ENCODE measurements at regions of chr2 and their contacts with region 1.

Region 1: DNA sequence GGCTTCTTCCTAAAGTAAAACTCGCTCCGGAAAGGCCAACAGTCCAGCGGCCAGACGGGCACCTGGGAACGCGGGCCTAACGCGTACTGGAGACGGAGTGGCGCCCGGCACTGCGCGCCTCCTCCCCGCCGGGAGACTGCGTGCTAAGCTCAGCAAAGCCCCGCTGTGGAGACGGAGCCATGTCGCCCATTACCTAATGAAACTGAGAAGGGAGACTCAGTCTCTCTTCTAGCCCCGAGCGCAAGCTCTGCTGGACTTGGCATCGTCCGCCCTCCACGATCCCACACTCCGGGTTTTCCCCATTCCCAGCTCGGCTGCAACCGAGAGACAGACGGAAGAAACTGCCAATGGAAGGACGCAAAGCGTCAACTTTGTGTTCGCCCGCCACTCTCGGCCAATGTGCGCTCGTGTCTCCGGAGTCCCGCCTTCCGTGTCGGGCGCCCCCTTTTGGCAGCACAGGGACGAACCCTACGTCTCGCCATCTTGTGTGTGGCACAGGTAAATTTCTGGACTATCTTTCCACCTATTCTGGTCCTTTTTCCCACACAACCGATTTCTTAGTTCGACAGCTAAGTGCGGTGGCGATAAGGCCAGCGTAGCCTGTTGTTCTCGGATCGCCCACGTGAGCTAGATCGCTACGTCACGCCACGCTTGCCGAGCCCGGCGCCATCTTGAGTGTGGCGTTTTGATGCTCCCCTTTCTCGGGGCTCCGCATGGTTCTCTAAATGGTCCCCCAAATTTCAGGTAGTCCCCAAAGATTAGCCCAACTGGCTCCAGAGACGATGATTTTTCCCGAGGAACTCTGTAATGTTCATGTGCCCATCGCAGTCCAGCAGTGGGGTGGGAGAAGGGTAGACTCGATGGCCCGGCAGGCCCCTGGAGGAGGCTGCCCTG is 1.3 kb upstream of the PTMA start:
- DNase-seq: peak; percentile 94
- ATAC-seq: peak; percentile 47
- H3K4me3 Mint-ChIP-seq: peak overlapping the region; percentile 97
- H3K27ac Mint-ChIP-seq: peak overlapping the region; percentile 100
- H3K4me1 Mint-ChIP-seq: peaks cover 36% of the 10 kb centered on the region
- H3K27me3 Mint-ChIP-seq: no peaks in the 10 kb centered on the region
- CTCF ChIP-seq: peak; percentile 84

Region 2: GRCh38 chr2:231463698-231464575 is 243.0 kb before region 1 on chr2 and contains the start of gene NCL:
- CTCF ChIA-PET with region 1: no interaction called
- POLR2A ChIA-PET with region 1: interaction called, 40 read pairs
- intact Hi-C with region 1: loop called (anchors 1 kb)
- DNase-seq: peak; percentile 71
- ATAC-seq: peak; percentile 54
- H3K4me3 Mint-ChIP-seq: peak within 1 kb of the TSS; percentile 98
- H3K27ac Mint-ChIP-seq: peak within 1 kb of the TSS; percentile 100
- H3K4me1 Mint-ChIP-seq: peaks cover 39% of the 10 kb centered on the region
- H3K27me3 Mint-ChIP-seq: no peaks in the 10 kb centered on the region
- CTCF ChIP-seq: no peak
- total RNA-seq, gene NCL: 693 and 761 TPM in 2 replicates

Region 3: DNA sequence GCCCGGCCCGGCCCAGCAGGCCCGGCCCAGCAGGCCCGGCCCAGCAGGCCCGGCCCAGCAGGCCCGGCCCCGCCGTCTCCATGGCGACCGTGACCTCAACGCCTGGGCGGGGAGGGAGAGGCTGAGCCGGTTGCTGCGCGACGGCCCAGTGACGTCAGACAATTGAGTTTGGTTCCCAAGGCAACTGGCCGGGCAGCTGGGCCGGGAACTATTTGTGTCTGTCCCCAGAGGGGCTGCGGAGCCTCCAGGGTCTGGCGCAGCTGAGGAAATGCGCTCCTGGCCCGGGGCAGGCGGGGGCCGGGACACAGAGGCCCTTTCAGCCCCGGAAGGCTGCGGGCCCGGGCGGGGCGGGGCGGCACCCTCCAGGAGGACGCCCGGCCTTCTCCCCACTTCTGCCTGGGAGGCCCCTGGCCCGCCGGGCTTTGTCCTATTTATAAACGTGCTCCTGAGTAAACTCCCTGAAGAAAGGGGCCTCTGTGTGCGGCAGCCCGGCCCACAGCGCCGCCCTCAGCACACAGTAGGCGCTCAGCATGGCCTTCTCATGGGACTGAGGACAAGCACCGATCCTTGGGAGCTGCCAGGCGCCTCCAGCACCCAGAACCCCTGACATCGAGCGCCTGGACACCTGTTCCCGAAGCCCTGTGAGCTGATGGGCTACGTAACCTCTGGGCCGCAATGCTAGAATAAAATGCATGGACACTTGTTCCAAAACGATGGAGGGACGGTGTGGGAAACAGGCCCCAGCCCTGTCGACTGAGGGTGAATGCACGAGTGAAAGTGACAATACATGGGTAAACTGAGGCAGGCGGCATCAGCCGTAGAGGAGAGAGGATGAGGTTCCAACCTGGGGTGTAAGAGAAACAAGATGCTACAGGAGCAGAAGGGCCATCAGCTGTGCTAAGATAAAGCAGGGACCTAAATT is 102.0 kb before region 1 on chr2:
- CTCF ChIA-PET with region 1: interaction called, 3 read pairs
- POLR2A ChIA-PET with region 1: interaction called, 315 read pairs
- intact Hi-C with region 1: loop called (anchors 1 kb)
- DNase-seq: peak; percentile 99
- ATAC-seq: peak; percentile 88
- H3K4me3 Mint-ChIP-seq: peak overlapping the region; percentile 72
- H3K27ac Mint-ChIP-seq: peak overlapping the region; percentile 87
- H3K4me1 Mint-ChIP-seq: peaks cover 31% of the 10 kb centered on the region
- H3K27me3 Mint-ChIP-seq: no peaks in the 10 kb centered on the region
- CTCF ChIP-seq: no peak

Region 4: GRCh38 chr2:231662028-231662810 is 44.8 kb before region 1 on chr2:
- CTCF ChIA-PET with region 1: interaction called, 8 read pairs
- POLR2A ChIA-PET with region 1: interaction called, 298 read pairs
- intact Hi-C with region 1: loop called (anchors 1 kb)
- DNase-seq: peak; percentile 97
- ATAC-seq: peak; percentile 78
- H3K4me3 Mint-ChIP-seq: peak overlapping the region; percentile 74
- H3K27ac Mint-ChIP-seq: peak overlapping the region; percentile 92
- H3K4me1 Mint-ChIP-seq: peaks cover 67% of the 10 kb centered on the region
- H3K27me3 Mint-ChIP-seq: no peaks in the 10 kb centered on the region
- CTCF ChIP-seq: no peak

Region 5: GRCh38 chr2:231680992-231681853 is 25.8 kb before region 1 on chr2:
- CTCF ChIA-PET with region 1: interaction called, 429 read pairs
- POLR2A ChIA-PET with region 1: interaction called, 717 read pairs
- intact Hi-C with region 1: loop called (anchors 1 kb)
- DNase-seq: peak; percentile 67
- ATAC-seq: peak; percentile 64
- H3K4me3 Mint-ChIP-seq: peak overlapping the region; percentile 84
- H3K27ac Mint-ChIP-seq: peak overlapping the region; percentile 79
- H3K4me1 Mint-ChIP-seq: peaks cover 58% of the 10 kb centered on the region
- H3K27me3 Mint-ChIP-seq: no peaks in the 10 kb centered on the region
- CTCF ChIP-seq: no peak

Region 6: DNA sequence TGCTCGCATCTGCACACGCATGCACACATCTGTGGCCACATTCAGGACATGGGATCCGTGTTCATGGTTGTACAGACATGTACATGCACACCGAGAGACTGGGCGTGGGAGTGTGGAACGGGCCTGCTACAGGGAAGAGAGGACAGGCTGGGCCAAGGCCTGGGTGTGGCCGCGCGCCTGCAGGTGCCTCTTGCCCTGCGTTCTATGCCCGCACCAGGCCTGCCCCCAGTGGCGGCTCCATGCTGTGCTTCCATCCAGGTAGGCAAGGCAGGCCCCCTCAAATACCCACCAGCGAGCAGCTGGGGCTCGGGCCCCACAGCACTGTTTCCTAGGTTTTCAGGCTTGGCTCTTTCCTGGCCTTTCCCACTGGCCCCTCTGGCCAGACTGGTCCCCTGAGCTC is 14.1 kb before region 1 on chr2:
- CTCF ChIA-PET with region 1: interaction called, 429 read pairs
- POLR2A ChIA-PET with region 1: interaction called, 280 read pairs
- intact Hi-C with region 1: no loop called
- DNase-seq: no peak
- ATAC-seq: no peak
- H3K4me3 Mint-ChIP-seq: no peak overlapping the region
- H3K27ac Mint-ChIP-seq: no peak overlapping the region
- H3K4me1 Mint-ChIP-seq: peaks cover 3% of the 10 kb centered on the region
- H3K27me3 Mint-ChIP-seq: no peaks in the 10 kb centered on the region
- CTCF ChIP-seq: no peak

Region 7: GRCh38 chr2:231780909-231781797 is 74.2 kb after region 1 on chr2 and contains the start of gene PDE6D:
- CTCF ChIA-PET with region 1: no interaction called
- POLR2A ChIA-PET with region 1: interaction called, 12 read pairs
- intact Hi-C with region 1: loop called (anchors 1 kb)
- DNase-seq: peak; percentile 95
- ATAC-seq: peak; percentile 89
- H3K4me3 Mint-ChIP-seq: peak within 1 kb of the TSS; percentile 99
- H3K27ac Mint-ChIP-seq: peak within 1 kb of the TSS; percentile 96
- H3K4me1 Mint-ChIP-seq: peaks cover 52% of the 10 kb centered on the region
- H3K27me3 Mint-ChIP-seq: no peaks in the 10 kb centered on the region
- CTCF ChIP-seq: no peak
- total RNA-seq, gene PDE6D: 35.7 and 41.3 TPM in 2 replicates

Region 8: GRCh38 chr2:232833830-232834229 is 1126.9 kb after region 1 on chr2:
- CTCF ChIA-PET with region 1: no interaction called
- POLR2A ChIA-PET with region 1: no interaction called
- intact Hi-C with region 1: no loop called
- DNase-seq: no peak
- ATAC-seq: no peak
- H3K4me3 Mint-ChIP-seq: no peak overlapping the region
- H3K27ac Mint-ChIP-seq: no peak overlapping the region
- H3K4me1 Mint-ChIP-seq: peaks cover 17% of the 10 kb centered on the region
- H3K27me3 Mint-ChIP-seq: no peaks in the 10 kb centered on the region
- CTCF ChIP-seq: no peak